ENCODE measurements at regions of chr6 and their contacts with region 1.

Region 1: DNA sequence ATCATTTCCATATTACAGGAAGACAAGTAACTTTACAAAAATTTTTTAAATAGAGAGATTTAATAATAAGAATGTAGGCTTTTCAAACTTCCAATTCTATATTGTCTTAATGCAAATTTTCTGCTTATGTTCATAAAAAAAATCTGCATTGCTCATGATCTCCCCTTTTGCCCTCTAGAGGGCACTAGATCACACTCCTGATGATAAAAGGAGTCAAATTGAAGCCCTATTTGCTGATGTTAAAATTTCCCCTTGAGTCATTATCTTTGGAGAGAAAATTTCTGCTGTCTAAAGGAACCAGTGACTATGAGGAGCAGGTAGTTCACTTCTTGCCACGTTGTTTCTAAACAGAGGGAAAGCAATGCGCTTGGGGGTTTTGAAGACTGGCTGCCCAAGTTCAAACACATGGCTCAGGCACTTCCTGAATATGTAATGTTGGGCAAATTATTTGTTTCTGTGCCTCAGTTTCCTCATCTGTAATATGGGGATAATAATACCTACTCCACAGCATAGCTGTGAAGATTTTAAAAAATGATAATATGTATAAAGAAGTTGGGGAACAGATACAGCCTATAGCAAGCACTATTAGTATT is 874.2 kb downstream of the TFAP2A start:
- DNase-seq: peak; percentile 81
- ATAC-seq: peak; percentile 31; the same call in 1 of the 2 replicates
- H3K4me3 ChIP-seq: no peak overlapping the region
- H3K27ac ChIP-seq: no peak overlapping the region
- H3K4me1 ChIP-seq: no peaks in the 10 kb centered on the region
- H3K27me3 ChIP-seq: no peaks in the 10 kb centered on the region
- CTCF ChIP-seq: peak; percentile 83

Region 2: DNA sequence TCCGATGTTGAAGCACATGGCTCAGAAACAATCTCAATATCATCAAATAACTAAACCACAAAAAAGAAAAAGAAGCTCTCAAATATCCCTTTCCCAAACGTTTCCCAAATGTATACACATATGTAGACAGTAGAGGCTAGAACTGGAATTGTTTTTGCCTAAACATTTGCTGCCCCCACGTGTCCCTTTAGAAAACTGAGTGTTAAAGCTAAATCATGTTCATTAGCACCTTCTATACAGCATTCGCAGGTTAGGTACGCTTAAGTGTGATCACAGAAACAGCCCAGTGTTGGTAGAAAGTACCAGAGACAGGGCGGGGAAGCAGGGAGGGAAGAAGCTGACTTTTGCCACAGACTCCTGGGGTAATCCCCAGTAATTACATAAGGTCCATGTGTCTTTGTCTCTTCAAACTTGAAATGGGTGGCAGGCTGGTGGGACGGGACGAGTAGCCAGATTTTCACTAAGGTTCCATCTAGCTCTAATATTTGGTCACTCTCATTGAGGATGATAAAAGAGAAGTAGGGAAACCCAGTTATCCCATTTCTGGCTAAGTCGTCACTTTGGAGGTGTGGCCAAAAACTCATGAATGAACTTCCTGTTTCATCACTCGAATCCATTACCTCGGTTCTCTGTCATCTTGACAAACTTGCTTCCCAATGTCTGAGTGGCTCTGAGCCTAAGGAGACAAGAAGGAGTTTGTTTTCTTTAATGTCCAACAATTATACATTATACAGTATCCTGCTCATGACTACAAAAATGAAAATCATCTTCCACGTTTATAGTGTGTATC is 889.2 kb after region 1 on chr6:
- CTCF ChIA-PET with region 1: no interaction called
- POLR2A ChIA-PET with region 1: no interaction called
- intact Hi-C with region 1: loop called (anchors 1 kb)
- DNase-seq: peak; percentile 75
- ATAC-seq: peak; percentile 92
- H3K4me3 ChIP-seq: peak overlapping the region; percentile 60
- H3K27ac ChIP-seq: no peak overlapping the region
- H3K4me1 ChIP-seq: peaks cover 20% of the 10 kb centered on the region
- H3K27me3 ChIP-seq: no peaks in the 10 kb centered on the region
- CTCF ChIP-seq: peak; percentile 90